GM12878 (cell line): ENCODE measurements at regions of chr10 and their contacts with region 1.

Region 1: DNA sequence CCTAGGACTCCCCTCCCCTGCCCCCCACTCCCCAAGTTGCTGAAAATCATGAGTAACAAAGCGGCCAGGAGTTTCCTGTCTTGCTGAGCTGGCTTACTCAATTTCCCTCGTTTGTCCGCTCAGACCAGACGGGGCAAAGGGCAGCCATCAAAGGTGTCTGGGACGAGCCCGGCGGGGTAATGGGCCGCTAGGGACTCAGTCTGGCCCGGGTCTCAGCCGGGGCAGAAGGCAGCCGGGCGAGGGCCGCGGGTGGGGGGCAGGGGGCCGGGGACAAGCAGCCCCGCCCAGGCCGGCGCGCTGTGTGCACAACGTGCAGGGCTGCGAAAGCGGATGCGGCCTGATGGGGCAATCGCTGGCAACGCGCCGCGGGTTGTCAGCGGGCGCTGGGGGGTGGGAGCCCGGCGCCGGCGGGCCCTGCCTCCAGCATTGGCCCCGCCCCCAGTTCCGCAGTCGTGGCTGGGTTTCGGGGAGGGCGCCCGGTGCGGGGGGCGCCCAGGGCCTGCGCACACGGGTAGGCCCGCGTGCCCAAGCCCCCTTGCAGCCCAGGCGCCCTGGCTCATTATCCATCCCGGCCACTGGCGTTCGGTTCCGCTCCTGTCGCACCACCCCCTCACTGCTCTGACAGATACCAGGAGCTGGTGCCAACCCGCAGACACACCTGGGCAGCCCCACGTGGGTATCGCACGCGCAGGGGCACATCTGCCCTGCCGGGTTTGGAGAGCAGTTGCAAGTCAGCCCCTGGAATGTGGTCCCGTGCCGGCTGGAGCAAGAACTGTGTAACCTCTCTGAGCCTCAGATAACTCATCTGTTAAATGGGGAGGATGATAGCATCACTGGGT is 35.1 kb downstream of the DNAJB12 start:
- DNase-seq: no peak
- ATAC-seq: peak; percentile 81
- H3K4me3 ChIP-seq: peak overlapping the region; percentile 76
- H3K27ac ChIP-seq: peak overlapping the region; percentile 89
- H3K4me1 ChIP-seq: peaks cover 59% of the 10 kb centered on the region
- H3K27me3 ChIP-seq: no peaks in the 10 kb centered on the region
- CTCF ChIP-seq: no peak
- EP300 ChIP-seq: 0 out of 4 replicates have a peak, but pooled peaks of 1 of the 2 experiments have one; percentile 59
- POLR2A ChIP-seq: peak; percentile 84
- RAD21 ChIP-seq: no peak

Region 2: GRCh38 chr10:71244431-71245419 is 1074.9 kb before region 1 on chr10:
- CTCF ChIA-PET with region 1: no interaction called
- POLR2A ChIA-PET with region 1: no interaction called
- RAD21 ChIA-PET with region 1: no interaction called
- SMC1A ChIA-PET with region 1: no interaction called
- in situ Hi-C with region 1: no loop called
- intact Hi-C with region 1: no loop called
- DNase-seq: no peak
- ATAC-seq: peak; percentile 29; the same call in 2 of the 3 replicates
- H3K4me3 ChIP-seq: no peak overlapping the region
- H3K27ac ChIP-seq: no peak overlapping the region
- H3K4me1 ChIP-seq: no peaks in the 10 kb centered on the region
- H3K27me3 ChIP-seq: peaks cover 0 to 4% of the 10 kb centered on the region in 2 experiments; a peak in 2 of 4 replicates
- CTCF ChIP-seq: no peak
- EP300 ChIP-seq: no peak
- POLR2A ChIP-seq: no peak
- RAD21 ChIP-seq: no peak

Region 3: GRCh38 chr10:72248468-72249151 is 71.0 kb before region 1 on chr10:
- CTCF ChIA-PET with region 1: interaction called, 10 read pairs
- POLR2A ChIA-PET with region 1: interaction called, 35 read pairs
- RAD21 ChIA-PET with region 1: interaction called, 23 read pairs
- SMC1A ChIA-PET with region 1: interaction called, 16 read pairs
- in situ Hi-C with region 1: no loop called
- intact Hi-C with region 1: no loop called
- DNase-seq: peak; percentile 99
- ATAC-seq: peak; percentile 95
- H3K4me3 ChIP-seq: peak overlapping the region; percentile 55; the same call in 1 of the 2 replicates
- H3K27ac ChIP-seq: peak overlapping the region; percentile 97
- H3K4me1 ChIP-seq: peaks cover 72% of the 10 kb centered on the region
- H3K27me3 ChIP-seq: no peaks in the 10 kb centered on the region
- CTCF ChIP-seq: no peak
- EP300 ChIP-seq: peak; percentile 88 to 91
- POLR2A ChIP-seq: peak; percentile 89
- RAD21 ChIP-seq: no peak

Region 4: GRCh38 chr10:72254813-72255568 is 64.6 kb before region 1 on chr10:
- CTCF ChIA-PET with region 1: interaction called, 13 read pairs
- POLR2A ChIA-PET with region 1: interaction called, 80 read pairs
- RAD21 ChIA-PET with region 1: interaction called, 73 read pairs
- SMC1A ChIA-PET with region 1: interaction called, 22 read pairs
- in situ Hi-C with region 1: no loop called
- intact Hi-C with region 1: loop called (anchors 2 kb)
- DNase-seq: no peak
- ATAC-seq: peak; percentile 73
- H3K4me3 ChIP-seq: peak overlapping the region; percentile 10; the same call in 1 of the 2 replicates
- H3K27ac ChIP-seq: peak overlapping the region; percentile 90
- H3K4me1 ChIP-seq: peaks cover 72% of the 10 kb centered on the region
- H3K27me3 ChIP-seq: no peaks in the 10 kb centered on the region
- CTCF ChIP-seq: peak in 1 of 3 experiments; percentile 33; a peak in 2 of 6 replicates
- EP300 ChIP-seq: no peak
- POLR2A ChIP-seq: peak; percentile 69
- RAD21 ChIP-seq: peak; percentile 40

Region 5: DNA sequence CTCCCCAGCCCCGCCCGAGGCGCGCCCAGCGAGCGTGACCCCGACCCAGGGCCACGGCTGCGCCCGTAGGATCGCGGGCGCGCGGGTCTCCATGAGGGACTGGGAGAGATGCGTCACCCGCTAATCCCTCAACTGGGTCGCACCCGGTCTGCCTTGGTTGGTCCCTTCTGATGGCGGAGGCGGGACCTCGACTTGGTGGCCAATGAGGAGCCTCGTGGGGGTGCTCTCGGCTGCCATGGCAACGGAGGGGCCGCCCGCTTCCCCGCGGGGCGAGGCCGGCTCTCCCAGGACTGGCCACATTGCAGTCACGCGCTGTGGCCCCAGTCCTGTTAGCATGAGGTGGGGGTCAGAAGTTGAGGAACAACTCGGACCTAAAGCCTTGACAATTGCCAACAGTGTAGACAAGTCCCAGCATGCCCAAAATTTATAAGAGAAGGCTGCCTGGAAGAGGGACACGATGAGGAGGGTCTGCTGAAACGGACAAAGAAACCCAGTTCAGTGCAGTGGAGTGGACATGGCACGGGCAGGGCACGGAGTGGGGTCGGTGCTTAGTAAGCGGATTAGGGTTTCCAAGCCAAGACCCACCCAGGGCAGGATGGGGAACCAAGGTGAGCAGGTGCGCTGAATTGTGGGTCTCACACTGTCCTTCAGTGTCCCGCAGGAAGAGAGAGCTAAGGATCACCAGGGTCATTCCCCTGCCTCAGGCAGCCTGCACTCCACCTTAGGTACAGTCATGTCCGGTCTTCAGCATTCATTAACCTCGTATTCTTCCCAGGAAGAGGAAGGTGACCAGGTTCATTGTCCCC is 21.5 kb before region 1 on chr10:
- CTCF ChIA-PET with region 1: interaction called, 11 read pairs
- POLR2A ChIA-PET with region 1: interaction called, 70 read pairs
- RAD21 ChIA-PET with region 1: interaction called, 58 read pairs
- SMC1A ChIA-PET with region 1: interaction called, 62 read pairs
- in situ Hi-C with region 1: no loop called
- intact Hi-C with region 1: loop called (anchors 1 kb)
- DNase-seq: peak; percentile 91
- ATAC-seq: peak; percentile 84
- H3K4me3 ChIP-seq: peak overlapping the region; percentile 80
- H3K27ac ChIP-seq: peak overlapping the region; percentile 100
- H3K4me1 ChIP-seq: peaks cover 40% of the 10 kb centered on the region
- H3K27me3 ChIP-seq: no peaks in the 10 kb centered on the region
- CTCF ChIP-seq: no peak
- EP300 ChIP-seq: peak in 1 of 2 experiments; percentile 24; a peak in 1 of 4 replicates
- POLR2A ChIP-seq: peak; percentile 83
- RAD21 ChIP-seq: no peak

Region 6: GRCh38 chr10:72308320-72308987 is 11.2 kb before region 1 on chr10:
- CTCF ChIA-PET with region 1: interaction called, 12 read pairs
- POLR2A ChIA-PET with region 1: interaction called, 51 read pairs
- RAD21 ChIA-PET with region 1: interaction called, 4 read pairs
- SMC1A ChIA-PET with region 1: interaction called, 62 read pairs
- in situ Hi-C with region 1: no loop called
- intact Hi-C with region 1: no loop called
- DNase-seq: no peak
- ATAC-seq: peak; percentile 32
- H3K4me3 ChIP-seq: no peak overlapping the region
- H3K27ac ChIP-seq: no peak overlapping the region
- H3K4me1 ChIP-seq: peaks cover 14% of the 10 kb centered on the region
- H3K27me3 ChIP-seq: no peaks in the 10 kb centered on the region
- CTCF ChIP-seq: no peak
- EP300 ChIP-seq: no peak
- POLR2A ChIP-seq: no peak
- RAD21 ChIP-seq: no peak